Panc1 (cell line): ENCODE measurements at regions of chr4 and their contacts with region 1.

Region 1: DNA sequence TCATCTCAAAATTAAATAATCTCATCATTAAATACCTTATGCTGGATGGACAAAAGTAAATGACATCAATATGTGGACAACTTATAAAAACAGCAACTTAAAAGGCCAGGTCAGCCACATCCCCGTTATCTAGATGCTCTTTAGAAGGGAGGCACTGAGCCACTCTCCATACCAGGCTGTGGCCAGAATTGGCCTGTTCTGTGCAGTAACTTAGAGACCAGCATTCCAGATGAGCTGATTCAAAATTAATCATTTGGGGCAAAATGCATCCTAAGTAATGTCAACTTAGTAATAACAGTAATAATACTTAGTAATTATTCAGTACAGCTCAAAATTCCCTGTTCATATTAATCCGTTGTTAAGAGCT is 373.6 kb downstream of the FBXW7 start:
- DNase-seq: no peak
- ATAC-seq: no peak
- H3K4me3 ChIP-seq: no peak overlapping the region
- H3K27ac ChIP-seq: no peak overlapping the region
- H3K4me1 ChIP-seq: no peaks in the 10 kb centered on the region
- H3K27me3 ChIP-seq: no peaks in the 10 kb centered on the region; the same call in 1 of the 2 replicates
- CTCF ChIP-seq: no peak

Region 2: GRCh38 chr4:152360045-152360410 is 197.7 kb after region 1 on chr4:
- CTCF ChIA-PET with region 1: no interaction called
- POLR2A ChIA-PET with region 1: interaction called, 13 read pairs
- in situ Hi-C with region 1: no loop called
- intact Hi-C with region 1: no loop called
- DNase-seq: no peak
- ATAC-seq: no peak
- H3K4me3 ChIP-seq: no peak overlapping the region
- H3K27ac ChIP-seq: no peak overlapping the region
- H3K4me1 ChIP-seq: no peaks in the 10 kb centered on the region
- H3K27me3 ChIP-seq: no peaks in the 10 kb centered on the region
- CTCF ChIP-seq: no peak

Region 3: GRCh38 chr4:152640058-152640833 is 477.9 kb after region 1 on chr4:
- CTCF ChIA-PET with region 1: no interaction called
- POLR2A ChIA-PET with region 1: no interaction called
- in situ Hi-C with region 1: no loop called
- intact Hi-C with region 1: no loop called
- DNase-seq: peak; percentile 7
- ATAC-seq: peak; percentile 45; the same call in 1 of the 2 replicates
- H3K4me3 ChIP-seq: no peak overlapping the region
- H3K27ac ChIP-seq: no peak overlapping the region
- H3K4me1 ChIP-seq: no peaks in the 10 kb centered on the region; the same call in 1 of the 2 replicates
- H3K27me3 ChIP-seq: no peaks in the 10 kb centered on the region
- CTCF ChIP-seq: peak; percentile 57